Heart left ventricle (tissue), 16 donors: ENCODE measurements at regions of chr6 and their contacts with region 1.

Region 1: DNA sequence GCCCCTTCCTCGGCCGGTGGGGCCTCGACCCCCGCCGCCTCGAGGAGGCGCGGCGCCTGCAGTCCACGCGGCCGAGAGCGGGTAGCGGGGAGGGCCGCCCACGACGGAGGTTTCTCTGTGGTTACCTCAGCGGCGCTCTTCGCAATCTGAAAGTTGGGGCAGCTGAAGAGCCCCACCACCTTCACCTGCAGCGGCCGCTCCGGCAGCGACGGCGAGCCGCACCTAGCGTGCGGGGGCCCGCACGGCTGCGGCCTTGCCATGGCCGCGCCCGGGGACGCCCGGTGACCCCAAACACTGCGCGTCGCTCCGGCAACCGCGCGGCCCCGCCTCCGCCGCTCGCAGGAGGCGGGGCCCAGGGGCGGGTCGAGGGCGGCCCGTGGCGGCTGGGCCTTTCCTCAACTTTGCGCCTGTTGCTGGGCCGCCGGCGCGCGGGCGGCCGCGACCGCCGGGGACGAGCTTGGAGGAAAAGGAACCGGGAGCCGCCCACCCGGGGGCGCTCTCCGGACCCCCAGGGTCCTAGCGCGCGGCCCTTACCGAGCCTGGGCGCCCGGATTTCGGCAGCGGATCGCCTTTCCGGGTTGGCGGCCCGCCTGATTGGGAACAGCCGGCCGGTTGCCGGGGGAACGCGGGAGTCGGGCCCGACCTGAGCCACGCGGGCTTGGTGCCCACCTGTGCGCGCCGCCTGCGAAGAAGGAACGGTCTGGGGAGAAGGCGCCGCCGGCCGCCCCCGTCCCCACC is at the starts of genes PPIL6 and SMPD2:
- DNase-seq: peak; percentile 90 to 94 (median 92)
- ATAC-seq: peak; percentile 82 to 96 (median 94)
- H3K4me3 ChIP-seq: peak within 1 kb of the TSS; percentile 69 to 97 (median 84)
- H3K27ac ChIP-seq: peak within 1 kb of the TSS; percentile 47 to 89 (median 82)
- H3K4me1 ChIP-seq: peaks cover 0 to 24% (median 15%) of the 10 kb centered on the region in 12 donors
- H3K27me3 ChIP-seq: no peaks in the 10 kb centered on the region
- CTCF ChIP-seq: peak; percentile 16 to 68 (median 44)
- POLR2A ChIP-seq: peak in 1 of 2 donors; percentile 69
- total RNA-seq, gene PPIL6: 1.5 to 6.5 (median 3.4) TPM
- total RNA-seq, gene SMPD2: 2.0 to 7.1 (median 4.1) TPM

Region 2: GRCh38 chr6:109420796-109421583 is 19.5 kb before region 1 on chr6:
- intact Hi-C with region 1: no loop called
- DNase-seq: no peak
- ATAC-seq: no peak
- H3K4me3 ChIP-seq: no peak overlapping the region
- H3K27ac ChIP-seq: no peak overlapping the region
- H3K4me1 ChIP-seq: no peaks in the 10 kb centered on the region
- H3K27me3 ChIP-seq: no peaks in the 10 kb centered on the region
- CTCF ChIP-seq: no peak
- POLR2A ChIP-seq: no peak

Region 3: DNA sequence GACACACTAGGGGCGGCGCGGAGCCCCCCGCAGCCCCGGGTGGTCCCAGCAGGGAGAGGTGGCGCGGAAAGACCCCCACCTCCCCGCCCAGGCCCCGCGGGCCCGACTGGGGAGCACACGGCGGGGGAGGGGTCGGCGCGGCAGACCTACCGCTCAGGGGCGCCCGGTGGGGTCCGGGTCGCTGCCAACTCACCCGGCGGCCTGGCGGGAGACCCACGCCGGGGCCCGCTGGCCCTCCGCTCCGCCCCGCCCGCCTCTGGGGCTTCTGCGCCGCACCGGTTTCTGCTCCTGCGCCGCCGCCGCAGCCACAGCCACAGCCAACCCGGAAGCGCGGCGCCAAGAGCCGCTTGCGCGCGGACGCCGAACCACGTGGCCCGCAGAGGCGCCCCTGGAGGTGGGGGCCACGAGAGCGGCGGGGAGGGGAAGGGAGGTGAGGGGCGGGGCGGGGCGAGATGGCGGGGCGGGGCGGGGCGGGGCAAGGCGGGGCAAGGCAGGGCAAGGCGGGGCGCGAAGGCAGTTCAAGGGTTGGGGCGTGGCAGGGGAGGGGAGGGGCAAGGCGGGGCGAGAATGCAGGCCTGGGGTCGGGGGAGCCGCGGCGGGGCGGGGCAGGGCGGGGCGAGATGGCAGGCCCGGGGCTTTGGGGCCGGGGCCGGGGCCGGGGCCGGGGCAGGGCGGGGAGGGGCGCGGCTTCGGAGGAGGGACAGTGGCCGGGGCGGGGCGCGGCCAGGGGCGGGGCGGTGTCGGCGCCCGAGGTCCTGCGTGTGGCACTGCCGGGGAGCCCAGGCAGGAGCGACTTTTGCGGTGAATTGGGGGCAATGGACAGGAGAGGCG is 42.6 kb after region 1 on chr6 and contains the start of gene ZBTB24:
- intact Hi-C with region 1: loop called in 2 of 10 experiments (anchors 5 kb)
- DNase-seq: peak; percentile 91 to 97 (median 94)
- ATAC-seq: peak; percentile 90 to 97 (median 97)
- H3K4me3 ChIP-seq: peak within 1 kb of the TSS; percentile 83 to 100 (median 98)
- H3K27ac ChIP-seq: peak within 1 kb of the TSS in 11 of 12 donors; percentile 59 to 87 (median 81)
- H3K4me1 ChIP-seq: peaks cover 0 to 48% (median 39%) of the 10 kb centered on the region in 12 donors
- H3K27me3 ChIP-seq: no peaks in the 10 kb centered on the region
- CTCF ChIP-seq: no peak
- POLR2A ChIP-seq: peak in 1 of 2 donors; percentile 90
- total RNA-seq, gene ZBTB24: 2.4 to 4.8 (median 3.1) TPM